Heart right ventricle (tissue), 16 donors: ENCODE measurements at regions of chr2 and their contacts with region 1.

Region 1: GRCh38 chr2:207166039-207166348 is 246 bp upstream of the KLF7 start:
- DNase-seq: peak; percentile 99
- ATAC-seq: peak; percentile 92 to 96 (median 93)
- H3K4me3 ChIP-seq: peak overlapping the region; percentile 57 to 98 (median 82)
- H3K27ac ChIP-seq: peak overlapping the region; percentile 96 to 100 (median 100)
- H3K4me1 ChIP-seq: peaks cover 3 to 44% (median 40%) of the 10 kb centered on the region in 9 donors
- H3K27me3 ChIP-seq: no peaks in the 10 kb centered on the region
- CTCF ChIP-seq: no peak

Region 2: DNA sequence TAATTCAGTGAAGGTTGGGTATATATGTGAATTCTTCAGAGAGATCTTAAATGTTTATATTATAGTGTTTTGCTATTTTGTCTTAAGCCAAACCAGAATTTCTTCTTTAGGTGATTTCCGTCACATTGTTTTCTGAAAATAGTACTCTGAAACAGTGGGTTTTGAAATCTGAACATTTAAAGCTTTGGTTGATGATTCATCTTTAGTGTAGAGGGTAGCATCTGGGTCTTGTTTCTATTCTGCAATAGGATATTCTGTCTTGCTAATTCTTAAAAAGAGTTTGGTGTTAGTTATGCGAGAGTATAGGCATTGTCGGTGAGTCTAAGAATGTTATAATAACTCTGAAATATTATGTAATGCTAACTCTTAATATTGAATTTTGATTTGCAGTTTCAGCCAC is 593.3 kb before region 1 on chr2:
- intact Hi-C with region 1: no loop called
- DNase-seq: no peak
- ATAC-seq: no peak
- H3K4me3 ChIP-seq: no peak overlapping the region
- H3K27ac ChIP-seq: no peak overlapping the region
- H3K4me1 ChIP-seq: no peaks in the 10 kb centered on the region
- H3K27me3 ChIP-seq: no peaks in the 10 kb centered on the region
- CTCF ChIP-seq: no peak

Region 3: DNA sequence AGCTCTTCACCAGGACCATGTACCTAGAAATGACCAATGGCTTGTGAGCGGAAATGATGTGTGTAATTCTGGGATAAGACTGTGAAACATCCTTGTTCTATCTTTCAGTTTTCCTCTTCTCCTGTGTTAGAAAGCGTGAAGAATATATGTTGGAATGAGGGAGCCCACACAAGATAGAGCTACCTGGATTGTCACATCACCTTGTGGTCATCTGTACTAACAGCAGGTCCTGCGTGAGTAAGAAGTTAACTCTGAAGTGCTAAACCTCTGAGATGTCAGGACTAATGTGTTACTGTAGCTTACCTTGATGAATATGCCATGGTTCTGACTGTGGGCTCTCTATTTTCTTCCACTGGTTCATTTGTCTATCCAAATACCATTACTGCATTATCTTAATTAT is 325.0 kb before region 1 on chr2:
- intact Hi-C with region 1: no loop called
- DNase-seq: no peak
- ATAC-seq: no peak
- H3K4me3 ChIP-seq: no peak overlapping the region
- H3K27ac ChIP-seq: no peak overlapping the region
- H3K4me1 ChIP-seq: peaks cover 0 to 2% (median 0%) of the 10 kb centered on the region in 9 donors
- H3K27me3 ChIP-seq: no peaks in the 10 kb centered on the region
- CTCF ChIP-seq: no peak

Region 4: GRCh38 chr2:207046724-207047123 is 119.3 kb before region 1 on chr2:
- intact Hi-C with region 1: loop called in 1 of 10 experiments (anchors 10 kb)
- DNase-seq: no peak
- ATAC-seq: peak; percentile 30 to 85 (median 68)
- H3K4me3 ChIP-seq: no peak overlapping the region
- H3K27ac ChIP-seq: peak overlapping the region in 1 of 10 donors; percentile 64
- H3K4me1 ChIP-seq: peaks cover 0 to 18% (median 8%) of the 10 kb centered on the region in 9 donors
- H3K27me3 ChIP-seq: no peaks in the 10 kb centered on the region
- CTCF ChIP-seq: peak in 7 of 9 donors; percentile 20 to 56 (median 39)

Region 5: GRCh38 chr2:207091176-207091575 is 74.8 kb before region 1 on chr2:
- intact Hi-C with region 1: loop called in 5 of 10 experiments (anchors 5 to 10 kb)
- DNase-seq: no peak
- ATAC-seq: peak; percentile 73 to 87 (median 80)
- H3K4me3 ChIP-seq: no peak overlapping the region
- H3K27ac ChIP-seq: peak overlapping the region; percentile 24 to 86 (median 78)
- H3K4me1 ChIP-seq: peaks cover 34 to 99% (median 93%) of the 10 kb centered on the region in 9 donors
- H3K27me3 ChIP-seq: no peaks in the 10 kb centered on the region
- CTCF ChIP-seq: no peak

Region 6: GRCh38 chr2:207194017-207194416 is 28.0 kb after region 1 on chr2:
- intact Hi-C with region 1: no loop called
- DNase-seq: no peak
- ATAC-seq: no peak
- H3K4me3 ChIP-seq: no peak overlapping the region
- H3K27ac ChIP-seq: no peak overlapping the region
- H3K4me1 ChIP-seq: peaks cover 0 to 4% (median 0%) of the 10 kb centered on the region in 9 donors
- H3K27me3 ChIP-seq: no peaks in the 10 kb centered on the region
- CTCF ChIP-seq: no peak

Region 7: GRCh38 chr2:207223051-207223450 is 57.1 kb after region 1 on chr2:
- intact Hi-C with region 1: loop called in 3 of 10 experiments (anchors 5 to 10 kb)
- DNase-seq: no peak
- ATAC-seq: no peak
- H3K4me3 ChIP-seq: no peak overlapping the region
- H3K27ac ChIP-seq: no peak overlapping the region
- H3K4me1 ChIP-seq: peaks cover 0 to 41% (median 38%) of the 10 kb centered on the region in 9 donors
- H3K27me3 ChIP-seq: no peaks in the 10 kb centered on the region
- CTCF ChIP-seq: no peak

Region 8: GRCh38 chr2:207341804-207342203 is 175.8 kb after region 1 on chr2:
- intact Hi-C with region 1: loop called in 7 of 10 experiments (anchors 5 to 10 kb)
- DNase-seq: no peak
- ATAC-seq: no peak
- H3K4me3 ChIP-seq: no peak overlapping the region
- H3K27ac ChIP-seq: no peak overlapping the region
- H3K4me1 ChIP-seq: peaks cover 0 to 33% (median 20%) of the 10 kb centered on the region in 9 donors
- H3K27me3 ChIP-seq: no peaks in the 10 kb centered on the region
- CTCF ChIP-seq: peak in 4 of 9 donors; percentile 13 to 30 (median 23)